ENCODE measurements at regions of chr17 and their contacts with region 1.

Region 1: GRCh38 chr17:68771867-68772515 is 170.8 kb upstream of the FAM20A start:
- DNase-seq: peak; percentile 71 to 85 (median 82)
- H3K4me3 ChIP-seq: peak overlapping the region in 4 of 7 experiments; percentile 24 to 64 (median 42)
- H3K27ac ChIP-seq: no peak overlapping the region
- H3K4me1 ChIP-seq: peaks cover 0 to 3% (median 0%) of the 10 kb centered on the region in 4 experiments
- H3K27me3 ChIP-seq: no peaks in the 10 kb centered on the region

Region 2: DNA sequence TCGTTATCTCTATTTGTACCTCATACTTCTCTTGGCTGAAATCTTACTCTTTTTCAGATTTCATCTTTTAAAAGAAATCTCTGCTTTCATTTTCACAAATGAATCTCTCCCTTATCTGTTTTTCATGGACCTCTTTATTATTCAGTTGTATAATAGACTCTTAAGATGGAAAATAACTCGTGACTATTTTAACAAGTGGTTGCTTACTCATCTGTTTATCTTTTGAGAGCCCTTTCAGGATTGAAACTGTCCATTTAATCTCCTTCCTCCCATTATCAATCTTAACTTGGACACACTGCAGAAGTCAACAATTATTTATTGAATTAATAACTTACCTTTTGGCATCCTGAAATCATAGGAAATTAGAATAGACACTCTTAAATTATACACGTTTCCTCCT is 114.4 kb after region 1 on chr17:
- CTCF ChIA-PET with region 1: no interaction called
- POLR2A ChIA-PET with region 1: no interaction called
- DNase-seq: no peak
- H3K4me3 ChIP-seq: no peak overlapping the region
- H3K27ac ChIP-seq: no peak overlapping the region
- H3K4me1 ChIP-seq: no peaks in the 10 kb centered on the region
- H3K27me3 ChIP-seq: no peaks in the 10 kb centered on the region

Region 3: DNA sequence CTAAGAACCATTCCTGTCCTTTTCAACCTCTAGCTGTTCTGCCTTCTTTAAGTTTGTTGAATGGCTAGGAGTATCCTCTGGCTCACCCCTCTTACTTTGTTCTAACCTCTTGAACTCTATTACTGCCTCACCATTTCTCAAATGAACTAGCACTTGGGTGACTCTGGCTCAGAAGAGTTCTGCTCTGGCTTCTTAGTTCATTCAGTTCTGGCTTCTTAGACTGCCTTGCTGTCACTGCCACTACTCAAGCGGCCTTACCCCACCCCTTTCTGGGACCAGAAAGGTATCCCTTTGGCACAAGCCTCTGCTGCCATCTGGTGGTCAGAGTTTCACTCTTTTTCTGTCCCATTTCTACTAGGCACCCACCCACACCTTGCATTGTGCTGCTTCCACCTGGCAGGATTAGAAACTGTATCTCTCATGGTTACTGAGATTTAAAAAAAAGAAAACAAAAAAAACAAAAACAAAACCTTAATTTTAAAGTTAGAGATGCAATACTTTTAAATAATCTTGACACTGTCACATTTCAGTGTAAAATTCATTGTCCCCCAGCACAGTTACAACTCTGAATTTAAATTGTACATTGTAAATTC is 463.4 kb after region 1 on chr17:
- CTCF ChIA-PET with region 1: interaction called, 134 read pairs
- POLR2A ChIA-PET with region 1: no interaction called
- DNase-seq: peak; percentile 85 to 95 (median 93)
- H3K4me3 ChIP-seq: no peak overlapping the region
- H3K27ac ChIP-seq: no peak overlapping the region
- H3K4me1 ChIP-seq: peaks cover 0 to 4% (median 2%) of the 10 kb centered on the region in 4 experiments
- H3K27me3 ChIP-seq: no peaks in the 10 kb centered on the region

Measured in common myeloid progenitor, CD34-positive (primary cell).